ENCODE measurements at regions of chr6 and their contacts with region 1.

Region 1: DNA sequence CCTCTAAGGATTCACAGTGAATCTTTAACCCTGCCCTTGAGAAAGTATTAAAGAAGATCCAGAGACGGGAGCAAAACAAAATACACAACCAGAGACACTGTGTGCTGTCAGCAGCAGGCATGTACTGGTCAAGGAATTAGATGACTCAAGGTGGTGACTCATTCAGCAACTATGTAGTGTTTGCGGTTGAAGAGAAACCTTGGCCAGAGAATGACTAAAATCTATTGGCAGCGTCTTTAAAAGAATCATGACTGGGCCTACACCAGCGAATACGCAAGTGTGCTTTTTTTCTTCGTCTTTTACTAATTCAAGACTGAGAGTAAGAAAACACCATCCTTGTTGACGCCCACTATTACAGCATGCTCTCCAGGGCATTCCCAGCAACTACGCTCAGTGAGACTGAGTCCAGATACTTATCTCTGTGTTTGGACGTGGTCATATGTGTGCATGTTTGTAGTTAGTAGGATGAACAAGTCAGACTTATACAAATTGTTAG is 72.4 kb upstream of the BACH2 start:
- DNase-seq: peak in 1 of 5 donors; percentile 53
- H3K4me3 ChIP-seq: no peak overlapping the region
- H3K4me3 Mint-ChIP-seq: no peak overlapping the region
- H3K27ac ChIP-seq: no peak overlapping the region
- H3K27ac Mint-ChIP-seq: peak overlapping the region in 3 of 7 donors; percentile 3 to 36 (median 15)
- H3K4me1 ChIP-seq: peaks cover 9% of the 10 kb centered on the region
- H3K4me1 Mint-ChIP-seq: peaks cover 2 to 18% (median 8%) of the 10 kb centered on the region in 4 donors
- H3K27me3 ChIP-seq: no peaks in the 10 kb centered on the region
- H3K27me3 Mint-ChIP-seq: no peaks in the 10 kb centered on the region

Region 2: GRCh38 chr6:90328004-90328403 is 41.1 kb before region 1 on chr6:
- CTCF ChIA-PET with region 1: no interaction called
- POLR2A ChIA-PET with region 1: no interaction called
- intact Hi-C with region 1: loop called (anchors 5 kb)
- DNase-seq: no peak
- H3K4me3 ChIP-seq: no peak overlapping the region
- H3K4me3 Mint-ChIP-seq: no peak overlapping the region
- H3K27ac ChIP-seq: no peak overlapping the region
- H3K27ac Mint-ChIP-seq: no peak overlapping the region
- H3K4me1 ChIP-seq: no peaks in the 10 kb centered on the region
- H3K4me1 Mint-ChIP-seq: no peaks in the 10 kb centered on the region
- H3K27me3 ChIP-seq: no peaks in the 10 kb centered on the region
- H3K27me3 Mint-ChIP-seq: no peaks in the 10 kb centered on the region